ENCODE measurements at regions of chr7 and their contacts with region 1.

Region 1: GRCh38 chr7:130982160-130982638 is 248.2 kb upstream of the KLF14 start:
- DNase-seq: peak; percentile 54
- H3K4me3 ChIP-seq: no peak overlapping the region
- H3K27ac ChIP-seq: no peak overlapping the region
- H3K4me1 ChIP-seq: peaks cover 0 to 13% of the 10 kb centered on the region in 2 experiments; a peak in 2 of 4 replicates
- H3K27me3 ChIP-seq: no peaks in the 10 kb centered on the region
- CTCF ChIP-seq: peak; percentile 97
- EP300 ChIP-seq: no peak
- RAD21 ChIP-seq: peak; percentile 86

Region 2: GRCh38 chr7:130917669-130918128 is 64.5 kb before region 1 on chr7:
- CTCF ChIA-PET with region 1: no interaction called
- POLR2A ChIA-PET with region 1: no interaction called
- DNase-seq: no peak
- H3K4me3 ChIP-seq: no peak overlapping the region
- H3K27ac ChIP-seq: peak overlapping the region; percentile 51 to 100; a peak in 3 of 4 replicates
- H3K4me1 ChIP-seq: peaks cover 11 to 86% of the 10 kb centered on the region in 2 experiments
- H3K27me3 ChIP-seq: no peaks in the 10 kb centered on the region
- CTCF ChIP-seq: no peak
- EP300 ChIP-seq: peak in 1 of 2 experiments; percentile 59; a peak in 1 of 4 replicates
- RAD21 ChIP-seq: no peak

Region 3: DNA sequence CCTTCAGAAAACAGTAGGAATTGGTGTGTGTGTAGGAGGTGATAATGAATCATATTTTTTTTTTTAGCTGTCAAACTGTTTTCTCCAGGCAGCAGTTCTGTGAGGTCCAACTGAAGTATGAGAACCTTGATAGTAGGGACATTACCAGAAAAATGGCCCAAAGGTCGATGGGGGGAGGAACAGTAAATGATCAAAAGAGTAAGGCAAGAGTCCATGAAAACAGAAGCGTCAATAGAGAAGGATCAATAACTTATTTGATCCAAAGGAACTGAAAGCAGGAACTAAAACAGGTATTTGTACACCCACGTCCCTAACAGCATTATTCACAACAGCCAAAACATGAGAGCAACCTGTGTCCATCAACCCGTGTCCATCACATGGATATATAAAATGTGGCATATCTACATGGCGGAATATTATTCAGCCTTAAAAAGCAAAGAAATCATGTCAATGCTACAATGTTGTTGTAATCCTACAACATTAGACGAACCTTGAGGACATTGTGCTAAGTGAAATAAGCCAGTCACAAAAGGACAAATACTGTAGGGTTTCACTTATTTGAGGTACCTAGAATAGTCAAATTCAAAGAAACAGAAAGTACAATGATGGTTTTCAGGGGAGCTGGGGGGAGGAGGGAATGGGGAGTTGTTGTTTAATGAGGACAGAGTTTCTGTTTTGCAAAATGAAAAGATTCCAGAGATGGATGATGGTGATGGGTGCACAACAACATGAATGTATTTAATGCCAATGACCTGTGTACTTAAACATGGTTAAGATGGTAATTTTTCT is 34.2 kb before region 1 on chr7:
- CTCF ChIA-PET with region 1: interaction called, 13 read pairs
- POLR2A ChIA-PET with region 1: no interaction called
- DNase-seq: no peak
- H3K4me3 ChIP-seq: no peak overlapping the region
- H3K27ac ChIP-seq: no peak overlapping the region
- H3K4me1 ChIP-seq: peaks cover 0 to 22% of the 10 kb centered on the region in 2 experiments; a peak in 2 of 4 replicates
- H3K27me3 ChIP-seq: no peaks in the 10 kb centered on the region
- CTCF ChIP-seq: no peak
- EP300 ChIP-seq: no peak
- RAD21 ChIP-seq: no peak

Region 4: GRCh38 chr7:130966246-130967009 is 15.8 kb before region 1 on chr7:
- CTCF ChIA-PET with region 1: interaction called, 29 read pairs
- POLR2A ChIA-PET with region 1: no interaction called
- DNase-seq: no peak
- H3K4me3 ChIP-seq: no peak overlapping the region
- H3K27ac ChIP-seq: no peak overlapping the region
- H3K4me1 ChIP-seq: peaks cover 2 to 37% of the 10 kb centered on the region in 2 experiments; a peak in 3 of 4 replicates
- H3K27me3 ChIP-seq: no peaks in the 10 kb centered on the region
- CTCF ChIP-seq: no peak
- EP300 ChIP-seq: no peak
- RAD21 ChIP-seq: no peak

Region 5: DNA sequence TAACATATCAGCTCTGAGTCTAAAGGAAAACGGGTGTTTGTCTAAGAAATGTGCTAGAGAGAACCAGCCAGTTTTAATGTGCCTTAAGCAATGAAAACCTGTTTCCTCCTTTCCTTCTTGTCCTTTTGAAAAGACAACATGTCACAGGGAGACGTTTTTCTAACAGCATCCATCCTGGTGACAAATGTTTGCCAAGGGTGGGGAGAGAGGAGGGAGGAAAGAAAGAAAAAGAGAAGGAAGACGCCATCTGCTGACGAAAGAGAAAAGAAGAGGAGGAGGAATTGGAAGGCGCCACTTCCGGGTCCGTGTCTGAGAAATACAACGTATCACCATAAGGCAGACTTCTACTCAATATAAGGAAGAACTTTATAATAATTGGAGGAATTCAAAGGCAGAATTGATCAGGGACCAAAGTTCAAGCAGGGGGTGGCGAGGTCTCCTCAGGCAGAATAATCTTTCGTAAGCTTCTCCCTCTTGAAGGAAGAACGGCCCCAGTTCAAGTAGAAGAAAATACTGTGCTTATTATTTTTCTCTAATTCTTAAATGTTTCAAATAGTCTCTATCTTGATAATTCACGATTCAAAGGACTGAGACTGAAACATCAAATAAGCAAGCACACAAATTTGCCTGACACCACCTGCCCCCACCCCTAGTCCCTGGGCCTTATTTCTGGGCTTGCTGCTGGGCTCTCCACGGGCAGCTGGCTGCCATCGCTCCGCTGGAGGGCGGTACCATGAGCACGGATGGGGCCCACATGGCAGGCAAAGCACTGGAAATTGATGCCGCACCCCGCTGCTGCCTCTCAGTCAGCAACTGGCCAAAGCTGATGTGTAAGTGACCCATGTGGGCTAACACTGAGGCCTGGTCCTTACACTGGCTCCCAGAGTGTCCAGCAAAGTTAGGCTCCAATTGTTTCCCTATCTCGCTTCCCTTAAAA is 25.5 kb after region 1 on chr7:
- CTCF ChIA-PET with region 1: interaction called, 105 read pairs
- POLR2A ChIA-PET with region 1: no interaction called
- DNase-seq: peak; percentile 57
- H3K4me3 ChIP-seq: no peak overlapping the region
- H3K27ac ChIP-seq: peak overlapping the region; percentile 93 to 95
- H3K4me1 ChIP-seq: peaks cover 20 to 54% of the 10 kb centered on the region in 2 experiments
- H3K27me3 ChIP-seq: no peaks in the 10 kb centered on the region
- CTCF ChIP-seq: peak; percentile 81
- EP300 ChIP-seq: no peak
- RAD21 ChIP-seq: peak; percentile 73

Region 6: DNA sequence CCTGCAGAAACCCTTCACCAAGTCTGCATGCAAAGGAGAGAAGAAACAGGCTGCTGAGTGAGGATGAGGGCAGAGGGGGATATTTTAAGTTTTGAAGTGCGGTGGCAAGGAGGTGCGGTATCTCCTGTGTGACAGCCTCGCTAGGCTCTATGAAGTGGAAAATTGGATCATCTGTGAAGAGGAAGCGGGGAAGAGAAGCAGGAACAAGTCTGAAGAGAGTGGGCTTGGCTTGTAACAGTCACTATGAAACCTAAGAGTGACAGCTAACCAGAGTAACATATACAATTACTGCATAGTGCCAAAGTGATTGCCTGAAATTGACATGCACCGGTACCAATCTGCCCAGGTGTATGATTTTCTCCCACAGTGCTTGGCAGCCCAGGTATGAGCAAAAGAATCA is 39.3 kb after region 1 on chr7:
- CTCF ChIA-PET with region 1: interaction called, 25 read pairs
- POLR2A ChIA-PET with region 1: no interaction called
- DNase-seq: no peak
- H3K4me3 ChIP-seq: no peak overlapping the region
- H3K27ac ChIP-seq: no peak overlapping the region
- H3K4me1 ChIP-seq: peaks cover 0 to 3% of the 10 kb centered on the region in 2 experiments; a peak in 1 of 4 replicates
- H3K27me3 ChIP-seq: no peaks in the 10 kb centered on the region
- CTCF ChIP-seq: no peak
- EP300 ChIP-seq: no peak
- RAD21 ChIP-seq: no peak

Region 7: GRCh38 chr7:131045526-131045925 is 63.3 kb after region 1 on chr7:
- CTCF ChIA-PET with region 1: interaction called, 182 read pairs
- POLR2A ChIA-PET with region 1: no interaction called
- DNase-seq: no peak
- H3K4me3 ChIP-seq: no peak overlapping the region
- H3K27ac ChIP-seq: no peak overlapping the region
- H3K4me1 ChIP-seq: peaks cover 0 to 2% of the 10 kb centered on the region in 2 experiments; a peak in 2 of 4 replicates
- H3K27me3 ChIP-seq: no peaks in the 10 kb centered on the region
- CTCF ChIP-seq: no peak
- EP300 ChIP-seq: no peak
- RAD21 ChIP-seq: no peak

Region 8: DNA sequence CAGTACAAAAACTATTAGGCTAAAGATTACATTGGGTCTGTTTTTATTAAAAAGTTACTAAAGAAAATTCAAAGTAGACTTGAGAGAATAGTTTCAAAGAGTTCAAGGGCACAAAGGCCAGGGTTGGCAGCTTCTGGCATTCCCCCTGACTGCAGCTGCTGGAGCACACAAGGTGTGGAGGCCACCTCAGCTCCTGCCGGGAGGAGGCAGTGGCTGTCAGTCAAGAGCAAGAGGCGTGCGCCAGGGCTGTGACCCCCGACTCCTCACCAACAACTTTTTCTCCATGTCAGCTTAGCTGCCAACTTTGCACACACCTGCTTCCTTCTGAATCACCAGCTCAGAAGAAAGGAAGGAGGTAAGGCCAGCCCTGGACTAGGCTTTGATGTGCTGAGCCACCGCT is 1738.6 kb after region 1 on chr7:
- CTCF ChIA-PET with region 1: no interaction called
- POLR2A ChIA-PET with region 1: no interaction called
- DNase-seq: no peak
- H3K4me3 ChIP-seq: no peak overlapping the region
- H3K27ac ChIP-seq: no peak overlapping the region
- H3K4me1 ChIP-seq: no peaks in the 10 kb centered on the region
- H3K27me3 ChIP-seq: no peaks in the 10 kb centered on the region
- CTCF ChIP-seq: no peak
- EP300 ChIP-seq: no peak
- RAD21 ChIP-seq: no peak

Measured in SK-N-SH (cell line).